GM12878 (cell line): ENCODE measurements at regions of chr16 and their contacts with region 1.

Region 1: DNA sequence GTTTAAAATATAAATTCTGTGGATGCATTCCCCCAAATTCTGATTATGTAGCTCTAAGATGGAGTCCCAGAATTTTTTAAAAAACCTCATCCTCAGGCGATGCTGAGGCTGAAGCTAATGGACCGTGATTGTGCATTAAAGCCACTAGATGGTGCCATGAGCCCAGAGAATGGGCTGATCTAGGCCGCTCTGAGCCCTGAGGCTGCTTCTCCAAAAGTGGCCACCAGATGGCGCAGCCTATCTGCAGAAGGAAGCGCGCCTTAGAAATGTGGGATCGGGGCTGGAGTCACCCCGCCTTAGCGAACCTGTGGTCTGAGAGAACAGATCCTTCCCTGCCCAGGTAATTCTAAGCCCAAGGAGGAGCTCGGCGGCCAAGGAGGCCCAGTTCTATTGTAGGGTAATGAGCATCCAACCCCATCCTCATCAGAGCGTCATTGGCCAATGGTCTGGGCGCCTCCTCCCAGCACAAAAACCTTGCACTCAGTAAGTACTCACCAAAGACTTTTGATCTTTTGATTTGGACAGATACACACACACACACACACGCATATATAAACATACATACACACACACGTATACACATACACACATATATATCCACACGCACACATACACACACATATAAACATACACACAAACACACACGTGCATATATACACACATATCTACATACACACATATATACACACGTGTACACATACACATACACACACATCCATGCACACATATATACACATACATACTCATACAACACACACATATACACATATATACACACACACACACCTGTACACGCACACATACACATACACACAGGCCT is 13.7 kb upstream of the MMP2 start:
- DNase-seq: peak; percentile 13
- ATAC-seq: peak; percentile 98
- H3K4me3 ChIP-seq: no peak overlapping the region
- H3K27ac ChIP-seq: no peak overlapping the region
- H3K4me1 ChIP-seq: no peaks in the 10 kb centered on the region
- H3K27me3 ChIP-seq: no peaks in the 10 kb centered on the region; a peak in 1 of 4 replicates
- CTCF ChIP-seq: peak; percentile 98 to 100 (median 100); a peak in 5 of 6 replicates
- EP300 ChIP-seq: no peak
- POLR2A ChIP-seq: no peak
- RAD21 ChIP-seq: peak; percentile 100

Region 2: DNA sequence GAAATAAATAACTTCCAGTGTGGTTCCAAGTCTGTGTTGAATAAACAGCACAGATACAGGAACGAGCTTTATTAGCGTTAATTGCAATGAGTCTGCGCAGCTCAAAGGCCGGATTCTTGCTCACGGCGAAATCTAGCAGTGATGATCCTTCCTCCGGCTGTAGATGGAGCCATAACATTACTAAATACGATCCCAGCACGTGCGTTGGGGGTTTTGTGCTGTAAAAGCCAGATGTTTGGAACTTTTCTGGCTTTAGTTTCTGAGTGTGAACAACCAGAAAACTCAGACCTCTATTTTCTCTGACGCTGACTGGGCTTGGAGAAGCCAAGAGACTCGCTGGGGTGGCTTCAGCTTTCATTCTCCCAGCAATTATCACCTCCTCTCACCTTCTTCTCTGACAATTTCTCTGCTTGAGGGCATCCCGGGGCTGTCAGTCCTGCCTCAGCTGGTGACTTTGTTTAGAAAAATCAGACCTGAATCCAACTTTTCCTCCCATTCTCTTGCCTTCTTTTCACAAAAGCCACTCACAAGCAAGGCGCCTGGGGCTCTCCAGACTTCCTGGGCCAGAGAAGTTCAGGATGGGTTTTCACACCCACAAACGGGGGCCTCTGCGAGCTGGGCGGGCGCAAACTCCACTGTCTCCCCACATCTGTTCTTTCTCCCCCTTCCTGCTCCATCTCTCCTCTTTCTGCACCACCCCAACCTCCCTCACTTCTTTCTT is 1915.2 kb before region 1 on chr16:
- CTCF ChIA-PET with region 1: interaction called, 6 read pairs
- POLR2A ChIA-PET with region 1: no interaction called
- RAD21 ChIA-PET with region 1: interaction called, 4 read pairs
- SMC1A ChIA-PET with region 1: interaction called, 5 read pairs
- in situ Hi-C with region 1: no loop called
- intact Hi-C with region 1: loop called (anchors 10 kb)
- DNase-seq: peak; percentile 40
- ATAC-seq: peak; percentile 89
- H3K4me3 ChIP-seq: no peak overlapping the region
- H3K27ac ChIP-seq: no peak overlapping the region
- H3K4me1 ChIP-seq: no peaks in the 10 kb centered on the region
- H3K27me3 ChIP-seq: no peaks in the 10 kb centered on the region; a peak in 2 of 4 replicates
- CTCF ChIP-seq: peak; percentile 66 to 90 (median 70)
- EP300 ChIP-seq: no peak
- POLR2A ChIP-seq: no peak
- RAD21 ChIP-seq: peak; percentile 85

Region 3: DNA sequence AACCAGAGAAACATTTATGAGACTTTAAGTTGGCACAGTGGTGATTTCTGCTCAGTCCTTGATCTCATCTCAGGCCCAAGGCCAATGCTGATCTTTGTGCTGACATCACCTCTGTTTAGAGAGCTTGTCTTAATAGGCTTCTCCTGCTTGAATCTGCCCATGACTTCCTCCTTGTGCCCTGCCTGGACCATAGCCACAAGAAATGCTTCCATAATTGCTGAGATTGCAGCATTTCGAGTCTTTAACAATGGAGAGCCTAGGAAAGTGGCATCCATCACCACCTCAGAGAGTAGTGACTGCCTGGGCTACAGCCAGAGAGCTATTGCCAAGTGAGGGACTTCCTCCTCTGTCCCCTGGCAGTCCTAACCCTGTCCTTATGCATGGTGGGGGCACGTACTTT is 11.4 kb before region 1 on chr16:
- CTCF ChIA-PET with region 1: interaction called, 21 read pairs
- POLR2A ChIA-PET with region 1: no interaction called
- RAD21 ChIA-PET with region 1: interaction called, 3 read pairs
- SMC1A ChIA-PET with region 1: interaction called, 6 read pairs
- in situ Hi-C with region 1: no loop called
- intact Hi-C with region 1: no loop called
- DNase-seq: no peak
- ATAC-seq: no peak
- H3K4me3 ChIP-seq: no peak overlapping the region
- H3K27ac ChIP-seq: no peak overlapping the region
- H3K4me1 ChIP-seq: no peaks in the 10 kb centered on the region
- H3K27me3 ChIP-seq: no peaks in the 10 kb centered on the region
- CTCF ChIP-seq: no peak
- EP300 ChIP-seq: no peak
- POLR2A ChIP-seq: no peak
- RAD21 ChIP-seq: no peak

Region 4: GRCh38 chr16:55529018-55529417 is 63.7 kb after region 1 on chr16:
- CTCF ChIA-PET with region 1: interaction called, 11 read pairs
- POLR2A ChIA-PET with region 1: no interaction called
- RAD21 ChIA-PET with region 1: interaction called, 3 read pairs
- SMC1A ChIA-PET with region 1: no interaction called
- in situ Hi-C with region 1: no loop called
- intact Hi-C with region 1: no loop called
- DNase-seq: no peak
- ATAC-seq: no peak
- H3K4me3 ChIP-seq: no peak overlapping the region
- H3K27ac ChIP-seq: no peak overlapping the region
- H3K4me1 ChIP-seq: no peaks in the 10 kb centered on the region
- H3K27me3 ChIP-seq: no peaks in the 10 kb centered on the region
- CTCF ChIP-seq: no peak
- EP300 ChIP-seq: no peak
- POLR2A ChIP-seq: no peak
- RAD21 ChIP-seq: no peak

Region 5: DNA sequence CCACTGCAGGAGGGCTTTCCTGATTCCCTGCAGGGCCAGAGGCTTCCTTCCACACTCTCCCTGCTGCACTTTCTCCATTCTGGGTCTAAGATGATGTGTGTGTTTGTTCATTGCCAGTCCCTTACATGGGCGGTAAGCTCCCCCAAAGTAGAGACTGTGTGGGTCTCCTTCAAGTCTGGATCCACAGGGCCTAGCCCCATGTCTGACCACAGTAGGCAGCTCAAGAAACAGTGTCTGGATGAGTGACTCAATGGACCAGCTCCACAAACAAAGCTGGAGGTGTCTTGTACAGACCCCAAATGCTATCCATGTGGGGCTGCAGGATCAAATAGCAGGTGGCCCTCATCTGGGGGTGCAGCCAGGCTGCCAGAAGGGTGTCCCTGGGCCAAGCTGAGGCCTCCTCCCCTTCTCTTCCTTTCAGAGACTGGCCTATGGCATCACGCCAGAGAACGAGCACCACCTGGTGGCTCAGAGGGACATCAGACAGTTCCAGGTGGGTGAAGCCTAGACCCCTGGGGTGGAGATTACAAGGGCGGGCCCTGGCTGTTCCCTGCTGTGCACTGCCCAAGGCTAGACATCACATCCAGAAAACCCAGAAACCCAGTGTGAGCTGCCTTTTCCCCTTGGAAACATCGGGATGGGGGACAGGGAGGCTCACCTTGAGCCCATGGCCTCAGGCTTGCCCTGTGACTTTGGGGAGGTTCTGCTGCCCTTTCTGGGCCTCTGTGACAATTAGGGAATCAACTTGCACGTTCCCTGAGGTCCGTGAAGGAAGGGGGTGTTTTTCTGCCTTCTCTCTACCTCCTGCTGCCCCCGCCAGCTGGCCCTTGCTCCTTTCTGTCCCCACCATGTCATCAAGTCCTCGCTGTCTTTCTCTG is 236.4 kb after region 1 on chr16:
- CTCF ChIA-PET with region 1: interaction called, 104 read pairs
- POLR2A ChIA-PET with region 1: no interaction called
- RAD21 ChIA-PET with region 1: interaction called, 33 read pairs
- SMC1A ChIA-PET with region 1: interaction called, 28 read pairs
- in situ Hi-C with region 1: loop called (anchors 5 kb)
- intact Hi-C with region 1: loop called (anchors 1 kb)
- DNase-seq: no peak
- ATAC-seq: peak; percentile 97
- H3K4me3 ChIP-seq: no peak overlapping the region
- H3K27ac ChIP-seq: no peak overlapping the region
- H3K4me1 ChIP-seq: no peaks in the 10 kb centered on the region
- H3K27me3 ChIP-seq: no peaks in the 10 kb centered on the region; a peak in 1 of 4 replicates
- CTCF ChIP-seq: peak; percentile 47 to 61 (median 61)
- EP300 ChIP-seq: no peak
- POLR2A ChIP-seq: no peak
- RAD21 ChIP-seq: peak; percentile 71

Region 6: DNA sequence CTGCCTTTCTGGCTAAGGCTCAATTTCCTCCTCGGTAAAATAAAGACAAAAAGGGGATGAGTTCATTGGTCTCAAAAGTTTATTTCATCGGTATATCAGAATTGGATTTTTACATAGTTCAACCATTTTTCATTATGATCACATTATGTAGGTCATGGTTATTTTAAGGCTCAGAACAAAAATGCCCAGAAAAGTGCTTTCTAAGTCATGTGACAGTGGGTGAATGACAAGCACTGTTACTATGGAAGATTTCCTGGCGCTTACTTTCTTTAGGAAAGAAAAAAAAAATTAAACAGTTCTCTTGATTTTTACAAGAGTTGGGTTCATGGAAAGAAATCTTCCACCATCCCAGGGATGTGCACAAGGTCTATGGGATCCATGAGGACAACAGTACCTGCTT is 527.8 kb after region 1 on chr16:
- CTCF ChIA-PET with region 1: no interaction called
- POLR2A ChIA-PET with region 1: no interaction called
- RAD21 ChIA-PET with region 1: no interaction called
- SMC1A ChIA-PET with region 1: no interaction called
- in situ Hi-C with region 1: no loop called
- intact Hi-C with region 1: no loop called
- DNase-seq: no peak
- ATAC-seq: no peak
- H3K4me3 ChIP-seq: no peak overlapping the region
- H3K27ac ChIP-seq: no peak overlapping the region
- H3K4me1 ChIP-seq: no peaks in the 10 kb centered on the region
- H3K27me3 ChIP-seq: no peaks in the 10 kb centered on the region
- CTCF ChIP-seq: no peak
- EP300 ChIP-seq: no peak
- POLR2A ChIP-seq: no peak
- RAD21 ChIP-seq: no peak

Region 7: DNA sequence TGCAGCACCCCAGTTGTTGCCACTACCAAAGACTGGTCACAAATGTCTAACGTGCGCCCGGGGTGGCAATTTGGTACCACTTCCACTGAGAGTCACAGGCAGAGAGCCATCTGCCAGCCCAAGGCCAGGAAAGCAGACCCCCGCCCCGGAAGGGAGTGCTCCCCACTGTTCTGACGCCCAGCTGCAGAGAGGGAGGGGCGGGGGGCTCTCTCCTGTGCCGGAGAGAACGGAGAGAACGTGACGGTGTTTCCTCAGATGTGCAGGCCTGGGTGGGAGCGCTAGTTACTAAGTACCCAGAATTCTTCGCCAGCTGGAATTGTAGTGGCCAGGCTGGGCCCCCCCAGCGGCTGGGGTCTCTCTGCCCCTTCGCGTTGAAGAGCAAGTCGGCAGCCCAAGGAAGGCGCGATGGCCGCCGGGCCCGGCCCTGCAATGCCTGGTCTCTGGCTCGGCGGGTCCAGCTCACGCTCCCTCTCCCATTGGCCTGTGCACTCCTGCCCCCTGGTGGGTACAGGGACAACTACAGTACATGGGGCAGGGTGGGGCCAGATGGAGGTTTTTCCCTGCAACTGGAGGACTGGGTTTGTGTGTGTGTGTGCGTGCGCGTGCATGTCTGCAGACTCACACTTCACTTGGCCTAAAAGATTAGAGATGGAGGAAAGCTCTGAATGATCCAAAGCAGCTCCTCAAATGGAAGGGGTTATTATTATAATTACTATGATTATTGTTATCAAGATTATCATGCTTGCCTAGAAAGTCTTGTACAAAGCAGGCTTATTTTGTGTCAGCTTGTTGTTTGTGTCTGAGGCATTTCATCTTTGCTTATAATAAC is 852.9 kb after region 1 on chr16:
- CTCF ChIA-PET with region 1: interaction called, 7 read pairs
- POLR2A ChIA-PET with region 1: no interaction called
- RAD21 ChIA-PET with region 1: no interaction called
- SMC1A ChIA-PET with region 1: no interaction called
- in situ Hi-C with region 1: loop called (anchors 10 kb)
- intact Hi-C with region 1: loop called (anchors 10 kb)
- DNase-seq: peak; percentile 3
- ATAC-seq: peak; percentile 99
- H3K4me3 ChIP-seq: no peak overlapping the region
- H3K27ac ChIP-seq: no peak overlapping the region
- H3K4me1 ChIP-seq: no peaks in the 10 kb centered on the region
- H3K27me3 ChIP-seq: peaks cover 2% of the 10 kb centered on the region in 2 experiments; a peak in 1 of 4 replicates
- CTCF ChIP-seq: peak; percentile 83 to 95 (median 90)
- EP300 ChIP-seq: no peak
- POLR2A ChIP-seq: no peak
- RAD21 ChIP-seq: peak; percentile 91